ENCODE measurements at regions of chr3 and their contacts with region 1.

Region 1: GRCh38 chr3:197575362-197575761 is 19.6 kb upstream of the BDH1 start:
- DNase-seq: no peak
- ATAC-seq: no peak
- H3K4me3 ChIP-seq: no peak overlapping the region
- H3K27ac ChIP-seq: no peak overlapping the region
- H3K4me1 ChIP-seq: no peaks in the 10 kb centered on the region
- H3K27me3 ChIP-seq: peaks cover 29% of the 10 kb centered on the region
- CTCF ChIP-seq: no peak
- POLR2A ChIP-seq: no peak
- RAD21 ChIP-seq: no peak

Region 2: DNA sequence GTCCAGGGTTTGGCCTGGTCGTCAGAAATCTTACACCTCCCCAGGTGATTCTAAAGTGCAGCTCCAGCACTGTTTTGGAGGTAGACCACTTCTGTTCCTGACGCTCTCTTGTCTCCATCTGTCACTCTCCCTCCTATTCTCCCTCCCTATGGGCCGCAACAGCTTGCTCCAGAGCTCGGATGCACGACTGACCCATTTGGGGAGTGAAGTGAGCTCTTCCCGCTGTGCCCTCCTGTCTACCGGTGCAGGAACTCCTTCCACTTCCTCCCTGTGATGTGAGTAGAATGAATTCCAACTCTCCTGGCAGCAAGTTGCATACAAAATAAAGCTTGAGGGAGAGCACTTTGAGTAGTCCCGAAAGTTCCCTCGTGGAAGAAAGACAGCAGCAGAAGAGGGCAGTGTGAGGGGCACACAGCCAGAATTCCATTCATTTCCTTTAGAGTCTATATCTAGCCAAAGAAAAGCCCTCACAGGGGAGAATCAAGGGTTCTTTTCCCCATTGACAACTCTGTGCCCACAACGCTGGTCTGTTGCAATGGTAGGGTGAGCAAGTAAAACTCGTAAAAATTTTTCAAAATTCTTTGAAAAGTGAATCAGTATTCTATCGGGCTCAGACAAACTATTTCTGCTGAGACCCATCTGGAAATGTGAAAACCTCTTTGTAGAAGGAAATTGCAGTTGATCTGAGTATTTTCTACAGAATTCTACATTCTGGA is 20.3 kb after region 1 on chr3:
- CTCF ChIA-PET with region 1: no interaction called
- POLR2A ChIA-PET with region 1: interaction called, 13 read pairs
- dilution Hi-C with region 1: no loop called
- in situ Hi-C with region 1: no loop called
- intact Hi-C with region 1: no loop called
- DNase-seq: no peak
- ATAC-seq: no peak
- H3K4me3 ChIP-seq: no peak overlapping the region
- H3K27ac ChIP-seq: no peak overlapping the region
- H3K4me1 ChIP-seq: peaks cover 3% of the 10 kb centered on the region; the same call in 1 of the 2 replicates
- H3K27me3 ChIP-seq: 0 out of 2 replicates have a peak, but pooled peaks cover 2% of the 10 kb centered on the region
- CTCF ChIP-seq: no peak
- POLR2A ChIP-seq: no peak
- RAD21 ChIP-seq: no peak

Region 3: DNA sequence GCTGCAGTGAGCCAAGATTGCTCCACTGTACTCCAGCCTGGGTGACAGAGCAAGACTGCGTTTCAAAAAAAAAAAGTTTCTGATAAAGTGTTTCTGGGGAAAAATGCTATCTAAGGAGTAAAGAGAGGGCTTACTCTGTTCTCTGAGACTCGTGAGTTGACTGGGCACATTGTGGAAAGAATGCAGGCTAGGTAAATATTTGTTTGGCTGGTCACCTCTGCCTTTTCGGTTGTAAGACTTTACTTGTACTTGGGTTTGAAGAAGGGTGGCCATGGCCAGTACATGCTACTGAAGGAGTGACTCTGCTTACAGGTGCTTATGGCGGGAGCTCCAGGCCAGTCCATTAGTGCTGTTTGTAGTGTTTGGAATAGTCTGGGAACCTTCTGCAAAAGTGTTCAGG is 92.6 kb after region 1 on chr3:
- CTCF ChIA-PET with region 1: no interaction called
- POLR2A ChIA-PET with region 1: no interaction called
- dilution Hi-C with region 1: no loop called
- in situ Hi-C with region 1: no loop called
- intact Hi-C with region 1: no loop called
- DNase-seq: no peak
- ATAC-seq: no peak
- H3K4me3 ChIP-seq: no peak overlapping the region
- H3K27ac ChIP-seq: no peak overlapping the region
- H3K4me1 ChIP-seq: no peaks in the 10 kb centered on the region
- H3K27me3 ChIP-seq: no peaks in the 10 kb centered on the region
- CTCF ChIP-seq: no peak
- POLR2A ChIP-seq: no peak
- RAD21 ChIP-seq: no peak

Region 4: GRCh38 chr3:197836244-197836643 is 260.9 kb after region 1 on chr3:
- CTCF ChIA-PET with region 1: no interaction called
- POLR2A ChIA-PET with region 1: no interaction called
- dilution Hi-C with region 1: no loop called
- in situ Hi-C with region 1: no loop called
- intact Hi-C with region 1: no loop called
- DNase-seq: no peak
- ATAC-seq: no peak
- H3K4me3 ChIP-seq: no peak overlapping the region
- H3K27ac ChIP-seq: no peak overlapping the region
- H3K4me1 ChIP-seq: no peaks in the 10 kb centered on the region
- H3K27me3 ChIP-seq: no peaks in the 10 kb centered on the region
- CTCF ChIP-seq: no peak
- POLR2A ChIP-seq: no peak
- RAD21 ChIP-seq: no peak

Measured in IMR-90 (cell line).